CD4-positive, alpha-beta T cell (primary cell): ENCODE measurements at regions of chr2 and their contacts with region 1.

Region 1: DNA sequence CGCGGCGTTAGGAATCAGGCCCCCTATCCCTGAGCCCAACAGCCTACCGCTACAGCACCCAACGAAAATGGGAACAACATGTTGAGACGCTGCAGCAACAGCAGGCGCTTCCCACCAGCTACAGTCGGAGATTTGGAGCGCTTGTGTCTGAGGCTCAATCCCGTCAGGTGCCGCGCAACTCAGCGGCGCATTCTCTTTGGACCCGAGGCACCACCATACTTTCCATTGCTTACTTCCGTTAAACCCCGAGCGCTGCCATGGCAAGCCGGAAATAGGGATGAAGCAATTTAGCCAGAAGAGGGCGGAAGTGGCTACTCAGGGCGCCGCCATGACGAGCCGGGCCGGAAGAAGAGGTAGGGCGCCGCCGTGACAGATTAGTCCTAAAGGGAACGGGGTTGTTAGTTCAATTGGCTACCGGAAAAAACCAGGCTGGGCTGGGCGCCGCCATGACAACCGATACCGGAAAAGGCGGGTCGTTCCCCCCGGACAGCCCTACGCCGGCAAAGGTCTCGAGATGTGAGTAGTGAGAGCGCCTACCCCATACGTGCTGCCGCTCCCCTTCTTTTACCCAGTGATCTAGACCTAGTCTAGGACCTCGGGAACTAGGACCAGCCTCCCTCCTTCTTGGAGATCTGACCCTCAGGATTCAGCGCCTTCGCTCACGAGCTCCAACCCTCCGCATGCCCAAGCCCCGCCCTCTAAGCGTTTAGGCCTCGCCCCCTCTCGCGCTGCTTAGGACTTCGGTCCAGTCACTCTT is at the start of gene CHCHD5:
- DNase-seq: peak; percentile 83 to 98 (median 90)
- ATAC-seq: peak; percentile 86
- H3K4me3 ChIP-seq: peak within 1 kb of the TSS; percentile 89
- H3K4me3 Mint-ChIP-seq: peak within 1 kb of the TSS; percentile 94
- H3K27ac ChIP-seq: peak within 1 kb of the TSS; percentile 66 to 92
- H3K27ac Mint-ChIP-seq: peak within 1 kb of the TSS; percentile 94
- H3K4me1 ChIP-seq: peaks cover 35% of the 10 kb centered on the region
- H3K4me1 Mint-ChIP-seq: peaks cover 44% of the 10 kb centered on the region
- H3K27me3 ChIP-seq: no peaks in the 10 kb centered on the region
- H3K27me3 Mint-ChIP-seq: no peaks in the 10 kb centered on the region
- CTCF ChIP-seq: no peak
- total RNA-seq, gene CHCHD5: 13.4 to 14.3 TPM

Region 2: GRCh38 chr2:112121682-112122254 is 462.5 kb before region 1 on chr2:
- CTCF ChIA-PET with region 1: interaction called, 3 read pairs
- POLR2A ChIA-PET with region 1: no interaction called
- intact Hi-C with region 1: loop called in 1 of 2 experiments (anchors 10 kb)
- DNase-seq: peak in 11 of 14 experiments; percentile 20 to 76 (median 45)
- ATAC-seq: no peak
- H3K4me3 ChIP-seq: no peak overlapping the region
- H3K4me3 Mint-ChIP-seq: no peak overlapping the region
- H3K27ac ChIP-seq: no peak overlapping the region
- H3K27ac Mint-ChIP-seq: peak overlapping the region; percentile 35
- H3K4me1 ChIP-seq: no peaks in the 10 kb centered on the region
- H3K4me1 Mint-ChIP-seq: no peaks in the 10 kb centered on the region
- H3K27me3 ChIP-seq: no peaks in the 10 kb centered on the region
- H3K27me3 Mint-ChIP-seq: no peaks in the 10 kb centered on the region
- CTCF ChIP-seq: peak; percentile 80

Region 3: GRCh38 chr2:112259509-112260294 is 324.6 kb before region 1 on chr2:
- CTCF ChIA-PET with region 1: no interaction called
- POLR2A ChIA-PET with region 1: interaction called, 4 read pairs
- intact Hi-C with region 1: loop called in 1 of 2 experiments (anchors 1 kb)
- DNase-seq: peak; percentile 75 to 91 (median 82)
- ATAC-seq: peak; percentile 51
- H3K4me3 ChIP-seq: no peak overlapping the region
- H3K4me3 Mint-ChIP-seq: peak overlapping the region; percentile 5
- H3K27ac ChIP-seq: no peak overlapping the region
- H3K27ac Mint-ChIP-seq: no peak overlapping the region
- H3K4me1 ChIP-seq: peaks cover 15% of the 10 kb centered on the region
- H3K4me1 Mint-ChIP-seq: peaks cover 7% of the 10 kb centered on the region
- H3K27me3 ChIP-seq: peaks cover 0 to 4% of the 10 kb centered on the region in 2 experiments
- H3K27me3 Mint-ChIP-seq: no peaks in the 10 kb centered on the region
- CTCF ChIP-seq: peak; percentile 97

Region 4: DNA sequence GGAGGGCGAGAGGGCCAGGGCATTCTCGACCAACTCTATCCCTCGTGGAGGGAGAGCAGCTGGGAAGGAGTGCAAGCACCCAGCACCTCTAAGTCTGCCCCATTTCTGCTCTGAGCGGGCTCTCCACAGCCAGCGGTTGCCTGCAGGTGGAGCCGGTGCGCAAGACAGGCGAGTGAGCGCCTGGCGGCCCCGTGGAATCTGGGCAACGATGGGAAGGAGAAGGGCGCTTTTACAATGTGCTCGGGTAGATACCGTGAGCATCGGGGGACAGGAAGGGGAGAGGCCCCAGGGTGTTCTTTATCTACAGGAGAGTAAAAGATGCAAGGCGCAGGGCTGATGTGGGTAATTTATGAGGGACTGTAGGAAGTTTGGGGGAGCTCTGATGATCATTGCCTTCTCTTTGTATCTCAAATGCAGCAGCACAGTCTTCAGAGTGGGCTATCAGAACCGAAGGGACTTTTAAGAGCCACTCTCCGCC is 103.2 kb before region 1 on chr2:
- CTCF ChIA-PET with region 1: interaction called, 13 read pairs
- POLR2A ChIA-PET with region 1: interaction called, 4 read pairs
- intact Hi-C with region 1: loop called (anchors 1 to 2 kb)
- DNase-seq: peak; percentile 72 to 91 (median 79)
- ATAC-seq: peak; percentile 81
- H3K4me3 ChIP-seq: peak overlapping the region; percentile 77
- H3K4me3 Mint-ChIP-seq: peak overlapping the region; percentile 93
- H3K27ac ChIP-seq: peak overlapping the region; percentile 48 to 75
- H3K27ac Mint-ChIP-seq: peak overlapping the region; percentile 85
- H3K4me1 ChIP-seq: peaks cover 28% of the 10 kb centered on the region
- H3K4me1 Mint-ChIP-seq: peaks cover 25% of the 10 kb centered on the region
- H3K27me3 ChIP-seq: no peaks in the 10 kb centered on the region
- H3K27me3 Mint-ChIP-seq: no peaks in the 10 kb centered on the region
- CTCF ChIP-seq: peak; percentile 84

Region 5: DNA sequence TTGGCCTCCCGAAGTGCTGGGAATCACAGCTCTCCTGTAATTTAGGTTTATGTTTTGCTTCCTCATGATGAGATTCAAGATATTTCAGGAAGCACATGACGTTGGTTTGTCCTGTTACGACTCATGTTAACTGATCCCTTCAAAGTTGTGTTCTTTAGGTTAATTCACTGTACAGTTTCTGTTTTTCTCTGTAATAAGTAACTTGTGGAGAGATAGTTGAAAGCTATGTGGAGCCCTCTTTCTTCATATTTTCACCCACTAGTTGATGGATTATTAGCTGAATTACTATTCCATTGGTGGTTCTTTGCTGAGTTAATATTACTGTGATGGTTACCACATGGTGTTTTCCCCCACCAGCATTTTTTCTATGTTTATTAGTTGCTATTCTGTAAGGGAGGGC is 18.2 kb before region 1 on chr2:
- CTCF ChIA-PET with region 1: no interaction called
- POLR2A ChIA-PET with region 1: no interaction called
- intact Hi-C with region 1: no loop called
- DNase-seq: no peak
- ATAC-seq: no peak
- H3K4me3 ChIP-seq: no peak overlapping the region
- H3K4me3 Mint-ChIP-seq: no peak overlapping the region
- H3K27ac ChIP-seq: no peak overlapping the region
- H3K27ac Mint-ChIP-seq: no peak overlapping the region
- H3K4me1 ChIP-seq: no peaks in the 10 kb centered on the region
- H3K4me1 Mint-ChIP-seq: no peaks in the 10 kb centered on the region
- H3K27me3 ChIP-seq: no peaks in the 10 kb centered on the region
- H3K27me3 Mint-ChIP-seq: no peaks in the 10 kb centered on the region
- CTCF ChIP-seq: no peak

Region 6: DNA sequence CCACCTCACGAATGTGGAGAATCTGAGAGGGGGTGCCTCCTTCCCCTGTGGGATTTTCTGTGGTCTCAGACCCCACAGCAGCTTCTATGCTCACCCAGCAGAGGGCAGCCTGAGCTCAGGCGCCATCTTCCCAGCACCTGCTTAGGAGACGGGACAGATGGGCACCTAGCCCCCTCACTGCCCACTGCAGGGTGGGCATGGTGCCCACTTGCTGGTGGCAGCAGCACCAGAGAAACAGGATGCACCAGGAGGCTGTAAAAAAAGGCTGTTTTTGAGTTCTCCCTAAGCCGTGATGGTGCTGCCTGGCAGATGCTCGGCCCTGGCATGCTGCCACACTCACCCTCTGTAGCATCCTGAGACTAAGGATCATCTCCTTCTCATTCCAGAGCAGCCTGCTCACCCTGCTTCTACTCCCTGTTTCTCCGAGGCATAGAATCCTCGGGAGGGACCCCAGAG is 42.3 kb after region 1 on chr2:
- CTCF ChIA-PET with region 1: no interaction called
- POLR2A ChIA-PET with region 1: interaction called, 10 read pairs
- intact Hi-C with region 1: no loop called
- DNase-seq: peak; percentile 43 to 83 (median 60)
- ATAC-seq: peak; percentile 38
- H3K4me3 ChIP-seq: peak overlapping the region; percentile 41
- H3K4me3 Mint-ChIP-seq: peak overlapping the region; percentile 74
- H3K27ac ChIP-seq: peak overlapping the region in 1 of 2 donors; percentile 33
- H3K27ac Mint-ChIP-seq: peak overlapping the region; percentile 90
- H3K4me1 ChIP-seq: peaks cover 72% of the 10 kb centered on the region
- H3K4me1 Mint-ChIP-seq: peaks cover 69% of the 10 kb centered on the region
- H3K27me3 ChIP-seq: no peaks in the 10 kb centered on the region
- H3K27me3 Mint-ChIP-seq: no peaks in the 10 kb centered on the region
- CTCF ChIP-seq: peak; percentile 95